ENCODE measurements at regions of chr19 and their contacts with region 1.

Region 1: GRCh38 chr19:21505459-21506451 is at the start of gene ZNF429:
- DNase-seq: peak; percentile 79 to 96 (median 88)
- ATAC-seq: peak; percentile 98
- H3K4me3 ChIP-seq: peak within 1 kb of the TSS; percentile 70
- H3K4me3 Mint-ChIP-seq: peak within 1 kb of the TSS; percentile 100
- H3K27ac ChIP-seq: peak within 1 kb of the TSS; percentile 93 to 94
- H3K27ac Mint-ChIP-seq: peak within 1 kb of the TSS; percentile 100
- H3K4me1 ChIP-seq: peaks cover 21% of the 10 kb centered on the region
- H3K4me1 Mint-ChIP-seq: peaks cover 54% of the 10 kb centered on the region
- H3K27me3 ChIP-seq: no peaks in the 10 kb centered on the region
- H3K27me3 Mint-ChIP-seq: no peaks in the 10 kb centered on the region
- CTCF ChIP-seq: no peak
- total RNA-seq, gene ZNF429: 8.0 to 9.2 TPM

Region 2: DNA sequence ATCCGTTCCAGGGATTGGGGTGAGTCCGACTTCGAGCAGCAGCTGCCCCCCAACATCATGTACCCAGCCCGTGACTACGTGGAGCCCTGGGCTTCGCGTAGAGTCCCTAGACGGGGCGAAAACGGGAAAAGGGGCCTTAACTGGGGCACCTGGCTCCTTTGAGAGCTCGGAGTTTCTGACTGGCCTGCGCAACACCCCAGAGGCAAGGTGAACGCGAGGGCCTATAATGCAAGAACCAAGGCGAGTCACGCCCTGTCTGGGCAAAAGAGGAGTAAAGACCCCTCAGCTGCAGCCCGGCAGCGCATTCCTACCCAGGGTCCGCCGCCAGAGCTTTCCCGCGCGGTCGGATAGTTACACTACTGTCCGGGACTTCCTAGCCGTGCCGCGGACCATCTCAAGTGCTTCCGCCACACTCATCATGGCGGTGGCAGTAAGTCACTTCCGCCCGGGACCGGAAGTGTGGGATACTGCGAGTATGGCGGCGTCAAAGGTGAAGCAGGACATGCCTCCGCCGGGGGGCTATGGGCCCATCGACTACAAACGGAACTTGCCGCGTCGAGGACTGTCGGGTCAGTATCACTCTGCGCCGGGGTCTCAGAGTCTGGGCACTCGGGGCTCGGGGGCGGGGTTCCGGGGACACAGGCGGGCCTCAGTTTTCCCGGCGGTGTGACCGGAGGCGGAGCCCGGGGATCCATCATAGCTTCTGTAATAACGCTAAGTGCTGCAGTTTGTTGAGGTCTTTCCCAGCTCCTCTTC is 1989.8 kb before region 1 on chr19 and contains the start of gene NDUFA13:
- CTCF ChIA-PET with region 1: no interaction called
- POLR2A ChIA-PET with region 1: no interaction called
- intact Hi-C with region 1: loop called in 1 of 2 experiments (anchors 5 kb)
- DNase-seq: peak; percentile 84 to 97 (median 92)
- ATAC-seq: peak; percentile 87
- H3K4me3 ChIP-seq: peak within 1 kb of the TSS; percentile 77
- H3K4me3 Mint-ChIP-seq: peak within 1 kb of the TSS; percentile 94
- H3K27ac ChIP-seq: peak within 1 kb of the TSS; percentile 76 to 87
- H3K27ac Mint-ChIP-seq: peak within 1 kb of the TSS; percentile 86
- H3K4me1 ChIP-seq: peaks cover 46% of the 10 kb centered on the region
- H3K4me1 Mint-ChIP-seq: peaks cover 32% of the 10 kb centered on the region
- H3K27me3 ChIP-seq: no peaks in the 10 kb centered on the region
- H3K27me3 Mint-ChIP-seq: no peaks in the 10 kb centered on the region
- CTCF ChIP-seq: no peak
- total RNA-seq, gene NDUFA13: 145 to 156 TPM

Region 3: DNA sequence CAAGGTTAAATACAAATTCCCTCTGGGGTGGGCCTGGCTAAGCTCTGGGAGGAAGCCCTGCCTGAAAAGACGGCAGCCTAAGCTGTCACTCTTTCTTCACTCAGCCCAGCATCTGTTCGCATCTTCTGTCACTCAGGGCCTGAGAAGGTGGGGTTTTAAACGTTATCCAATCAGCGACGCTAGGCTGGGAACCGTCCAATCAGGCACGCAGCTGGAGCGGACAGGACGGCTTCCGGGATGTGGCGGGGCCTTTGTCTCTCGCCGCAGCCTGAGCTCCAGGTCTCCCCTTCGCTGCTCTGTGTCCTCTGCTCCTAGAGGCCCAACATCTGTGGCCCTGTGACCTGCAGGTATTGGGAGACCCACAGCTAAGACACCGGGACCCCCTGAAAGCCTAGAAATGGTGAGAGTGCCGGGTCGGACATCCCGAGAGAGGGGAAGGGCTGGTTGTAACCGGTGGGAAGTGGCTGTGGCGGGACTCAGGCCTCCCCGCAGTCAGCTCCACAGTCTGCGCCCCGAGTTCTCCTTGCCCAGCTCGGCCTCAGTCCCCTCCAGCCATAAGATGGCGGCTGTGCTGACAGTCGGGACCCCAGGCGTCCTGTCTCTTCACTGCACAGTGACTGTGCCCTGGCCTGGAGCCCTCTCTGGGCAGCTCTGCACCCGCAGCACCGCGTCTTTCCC is 363.8 kb before region 1 on chr19 and contains the start of gene ZNF431:
- CTCF ChIA-PET with region 1: no interaction called
- POLR2A ChIA-PET with region 1: interaction called, 20 read pairs
- intact Hi-C with region 1: no loop called
- DNase-seq: peak; percentile 79 to 96 (median 84)
- ATAC-seq: peak; percentile 99
- H3K4me3 ChIP-seq: peak within 1 kb of the TSS; percentile 67
- H3K4me3 Mint-ChIP-seq: peak within 1 kb of the TSS; percentile 95
- H3K27ac ChIP-seq: peak within 1 kb of the TSS; percentile 25 to 37
- H3K27ac Mint-ChIP-seq: peak within 1 kb of the TSS; percentile 91
- H3K4me1 ChIP-seq: peaks cover 8% of the 10 kb centered on the region
- H3K4me1 Mint-ChIP-seq: peaks cover 45% of the 10 kb centered on the region
- H3K27me3 ChIP-seq: no peaks in the 10 kb centered on the region
- H3K27me3 Mint-ChIP-seq: no peaks in the 10 kb centered on the region
- CTCF ChIP-seq: no peak
- total RNA-seq, gene ZNF431: 24.6 to 25.9 TPM

Region 4: GRCh38 chr19:21396893-21397572 is 108.7 kb before region 1 on chr19 and contains the start of gene ZNF493:
- CTCF ChIA-PET with region 1: no interaction called
- POLR2A ChIA-PET with region 1: interaction called, 30 read pairs
- intact Hi-C with region 1: loop called in 1 of 2 experiments (anchors 5 kb)
- DNase-seq: peak; percentile 81 to 97 (median 86)
- ATAC-seq: peak; percentile 99
- H3K4me3 ChIP-seq: peak within 1 kb of the TSS; percentile 97
- H3K4me3 Mint-ChIP-seq: peak within 1 kb of the TSS; percentile 98
- H3K27ac ChIP-seq: peak within 1 kb of the TSS; percentile 47 to 72
- H3K27ac Mint-ChIP-seq: peak within 1 kb of the TSS; percentile 82
- H3K4me1 ChIP-seq: peaks cover 14% of the 10 kb centered on the region
- H3K4me1 Mint-ChIP-seq: peaks cover 43% of the 10 kb centered on the region
- H3K27me3 ChIP-seq: no peaks in the 10 kb centered on the region
- H3K27me3 Mint-ChIP-seq: no peaks in the 10 kb centered on the region
- CTCF ChIP-seq: no peak
- total RNA-seq, gene ZNF493: 39.5 to 41.2 TPM

Region 5: GRCh38 chr19:21568816-21569493 is 63.2 kb after region 1 on chr19:
- CTCF ChIA-PET with region 1: no interaction called
- POLR2A ChIA-PET with region 1: interaction called, 130 read pairs
- intact Hi-C with region 1: loop called (anchors 1 to 5 kb)
- DNase-seq: peak; percentile 48 to 97 (median 76)
- ATAC-seq: peak; percentile 96
- H3K4me3 ChIP-seq: peak overlapping the region; percentile 81
- H3K4me3 Mint-ChIP-seq: peak overlapping the region; percentile 100
- H3K27ac ChIP-seq: peak overlapping the region; percentile 47 to 56
- H3K27ac Mint-ChIP-seq: peak overlapping the region; percentile 99
- H3K4me1 ChIP-seq: no peaks in the 10 kb centered on the region
- H3K4me1 Mint-ChIP-seq: peaks cover 36% of the 10 kb centered on the region
- H3K27me3 ChIP-seq: no peaks in the 10 kb centered on the region
- H3K27me3 Mint-ChIP-seq: no peaks in the 10 kb centered on the region
- CTCF ChIP-seq: no peak

Region 6: GRCh38 chr19:21626924-21627697 is 121.4 kb after region 1 on chr19:
- CTCF ChIA-PET with region 1: no interaction called
- POLR2A ChIA-PET with region 1: no interaction called
- intact Hi-C with region 1: no loop called
- DNase-seq: peak in 1 of 14 experiments; percentile 15
- ATAC-seq: no peak
- H3K4me3 ChIP-seq: no peak overlapping the region
- H3K4me3 Mint-ChIP-seq: no peak overlapping the region
- H3K27ac ChIP-seq: no peak overlapping the region
- H3K27ac Mint-ChIP-seq: no peak overlapping the region
- H3K4me1 ChIP-seq: no peaks in the 10 kb centered on the region
- H3K4me1 Mint-ChIP-seq: no peaks in the 10 kb centered on the region
- H3K27me3 ChIP-seq: no peaks in the 10 kb centered on the region
- H3K27me3 Mint-ChIP-seq: no peaks in the 10 kb centered on the region
- CTCF ChIP-seq: no peak

Region 7: DNA sequence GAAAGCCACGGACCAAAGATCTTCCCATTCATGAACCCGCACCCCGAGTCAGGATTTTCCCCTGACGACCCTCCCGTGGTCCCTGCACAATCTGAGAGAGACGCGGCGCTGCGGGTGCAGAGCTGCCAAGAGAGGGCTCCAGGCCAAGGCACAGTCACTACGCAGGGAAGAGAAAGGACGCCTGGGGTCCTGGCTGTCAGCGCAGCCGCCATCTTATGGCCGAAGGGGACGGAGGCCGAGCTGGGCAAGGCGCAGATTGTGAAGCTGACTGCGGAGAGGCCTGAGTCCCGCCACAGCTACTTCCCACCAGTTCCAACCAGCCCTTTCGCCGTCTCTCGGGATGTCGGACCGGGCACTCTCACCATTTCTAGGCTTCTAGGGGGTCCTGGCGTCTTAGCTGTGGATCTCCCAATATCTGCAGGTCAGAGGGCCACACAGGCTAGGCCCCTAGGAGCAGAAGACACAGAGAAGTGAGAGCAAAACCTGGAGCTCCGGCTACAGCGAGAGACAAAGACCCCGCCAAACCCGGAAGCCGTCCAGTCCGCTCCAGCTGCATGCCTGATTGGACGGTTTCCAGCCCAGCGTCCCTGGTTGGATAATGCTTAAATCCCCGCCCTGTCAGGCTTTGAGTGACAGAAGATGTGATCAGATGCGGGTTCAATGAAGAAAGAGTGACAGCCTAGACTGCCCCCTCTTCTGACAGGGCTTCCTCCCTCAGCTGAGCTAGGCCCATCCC is 261.5 kb after region 1 on chr19 and contains the start of gene ZNF100:
- CTCF ChIA-PET with region 1: no interaction called
- POLR2A ChIA-PET with region 1: interaction called, 31 read pairs
- intact Hi-C with region 1: no loop called
- DNase-seq: peak; percentile 73 to 92 (median 82)
- ATAC-seq: peak; percentile 98
- H3K4me3 ChIP-seq: peak within 1 kb of the TSS; percentile 94
- H3K4me3 Mint-ChIP-seq: peak within 1 kb of the TSS; percentile 95
- H3K27ac ChIP-seq: peak within 1 kb of the TSS; percentile 44 to 52
- H3K27ac Mint-ChIP-seq: peak within 1 kb of the TSS; percentile 87
- H3K4me1 ChIP-seq: peaks cover 13% of the 10 kb centered on the region
- H3K4me1 Mint-ChIP-seq: peaks cover 45% of the 10 kb centered on the region
- H3K27me3 ChIP-seq: no peaks in the 10 kb centered on the region
- H3K27me3 Mint-ChIP-seq: no peaks in the 10 kb centered on the region
- CTCF ChIP-seq: no peak
- total RNA-seq, gene ZNF100: 10.8 to 11.0 TPM

Region 8: GRCh38 chr19:22052644-22053013 is 546.9 kb after region 1 on chr19:
- CTCF ChIA-PET with region 1: no interaction called
- POLR2A ChIA-PET with region 1: interaction called, 18 read pairs
- intact Hi-C with region 1: no loop called
- DNase-seq: peak in 8 of 14 experiments; percentile 3 to 33 (median 15)
- ATAC-seq: peak; percentile 43
- H3K4me3 ChIP-seq: peak overlapping the region; percentile 70
- H3K4me3 Mint-ChIP-seq: peak overlapping the region; percentile 97
- H3K27ac ChIP-seq: no peak overlapping the region
- H3K27ac Mint-ChIP-seq: peak overlapping the region; percentile 90
- H3K4me1 ChIP-seq: peaks cover 7% of the 10 kb centered on the region
- H3K4me1 Mint-ChIP-seq: peaks cover 13% of the 10 kb centered on the region
- H3K27me3 ChIP-seq: no peaks in the 10 kb centered on the region
- H3K27me3 Mint-ChIP-seq: no peaks in the 10 kb centered on the region
- CTCF ChIP-seq: no peak

Region 9: DNA sequence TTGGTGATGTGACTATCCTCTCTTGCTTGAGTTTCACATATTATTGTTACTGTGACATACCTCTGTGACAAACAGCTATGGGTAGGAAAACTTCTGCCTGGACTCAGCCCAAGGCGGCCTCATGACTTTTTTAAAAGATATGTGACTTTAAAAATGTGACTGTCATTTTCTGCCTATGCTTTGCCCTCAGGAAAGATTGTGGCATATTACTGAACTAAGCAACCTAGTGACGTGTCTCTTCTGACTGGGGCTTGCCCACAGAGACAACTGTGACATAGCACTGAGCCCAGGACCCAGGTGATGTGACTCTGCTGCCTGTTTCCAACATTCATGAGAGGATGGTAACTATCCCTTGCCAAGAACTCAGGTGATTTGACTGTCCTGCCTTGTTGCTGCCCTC is 1412.5 kb after region 1 on chr19:
- CTCF ChIA-PET with region 1: no interaction called
- POLR2A ChIA-PET with region 1: no interaction called
- intact Hi-C with region 1: no loop called
- DNase-seq: no peak
- ATAC-seq: no peak
- H3K4me3 ChIP-seq: no peak overlapping the region
- H3K4me3 Mint-ChIP-seq: no peak overlapping the region
- H3K27ac ChIP-seq: no peak overlapping the region
- H3K27ac Mint-ChIP-seq: no peak overlapping the region
- H3K4me1 ChIP-seq: no peaks in the 10 kb centered on the region
- H3K4me1 Mint-ChIP-seq: no peaks in the 10 kb centered on the region
- H3K27me3 ChIP-seq: no peaks in the 10 kb centered on the region
- H3K27me3 Mint-ChIP-seq: no peaks in the 10 kb centered on the region
- CTCF ChIP-seq: no peak